Dorsolateral prefrontal cortex (tissue), 120 donors: ENCODE measurements at regions of chr2 and their contacts with region 1.

Region 1: GRCh38 chr2:61538200-61538919 is at the start of gene XPO1:
- DNase-seq: peak; percentile 99 to 100 (median 99)
- H3K4me3 ChIP-seq: peak within 1 kb of the TSS; percentile 54 to 96 (median 79)
- H3K27ac ChIP-seq: peak within 1 kb of the TSS; percentile 92 to 99 (median 98)
- H3K27me3 ChIP-seq: no peaks in the 10 kb centered on the region
- CTCF ChIP-seq: peak in 5 of 56 donors; percentile 3 to 27 (median 5)
- total RNA-seq, gene XPO1: 103 to 387 (median 148) TPM

Region 2: DNA sequence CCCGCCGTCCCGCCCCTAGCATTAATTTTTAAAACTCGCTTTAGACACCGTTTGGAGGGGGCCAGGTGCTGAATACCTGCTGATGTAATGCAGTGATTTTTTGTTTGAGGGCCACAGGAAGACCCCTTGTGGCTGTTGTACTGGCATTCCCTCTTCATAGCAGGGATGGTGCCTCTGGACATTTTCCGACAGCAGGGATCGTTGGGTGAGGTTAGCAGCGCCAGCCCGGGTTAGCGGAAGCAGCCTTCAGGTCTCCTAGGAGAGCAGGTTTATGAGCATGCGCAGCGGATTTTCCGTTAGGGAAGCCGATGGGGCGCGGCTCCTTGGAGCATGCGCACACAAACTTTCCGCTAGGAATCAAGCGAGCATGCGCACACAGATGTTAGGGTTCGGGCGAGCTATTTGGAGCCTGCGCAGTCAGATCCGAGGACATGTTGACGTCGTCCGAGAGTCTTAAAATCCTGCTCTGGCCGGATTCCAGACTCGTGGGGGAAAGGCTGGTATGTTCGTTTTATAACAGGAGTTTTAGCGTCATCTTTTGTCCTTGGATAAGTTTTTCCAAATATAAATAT is 393.6 kb before region 1 on chr2:
- intact Hi-C with region 1: loop called in 1 of 2 experiments (anchors 10 kb)
- DNase-seq: peak; percentile 79 to 93 (median 88)
- H3K4me3 ChIP-seq: peak overlapping the region; percentile 51 to 96 (median 69)
- H3K27ac ChIP-seq: peak overlapping the region in 58 of 59 donors; percentile 31 to 96 (median 87)
- H3K27me3 ChIP-seq: no peaks in the 10 kb centered on the region
- CTCF ChIP-seq: peak in 29 of 56 donors; percentile 3 to 50 (median 26)

Region 3: DNA sequence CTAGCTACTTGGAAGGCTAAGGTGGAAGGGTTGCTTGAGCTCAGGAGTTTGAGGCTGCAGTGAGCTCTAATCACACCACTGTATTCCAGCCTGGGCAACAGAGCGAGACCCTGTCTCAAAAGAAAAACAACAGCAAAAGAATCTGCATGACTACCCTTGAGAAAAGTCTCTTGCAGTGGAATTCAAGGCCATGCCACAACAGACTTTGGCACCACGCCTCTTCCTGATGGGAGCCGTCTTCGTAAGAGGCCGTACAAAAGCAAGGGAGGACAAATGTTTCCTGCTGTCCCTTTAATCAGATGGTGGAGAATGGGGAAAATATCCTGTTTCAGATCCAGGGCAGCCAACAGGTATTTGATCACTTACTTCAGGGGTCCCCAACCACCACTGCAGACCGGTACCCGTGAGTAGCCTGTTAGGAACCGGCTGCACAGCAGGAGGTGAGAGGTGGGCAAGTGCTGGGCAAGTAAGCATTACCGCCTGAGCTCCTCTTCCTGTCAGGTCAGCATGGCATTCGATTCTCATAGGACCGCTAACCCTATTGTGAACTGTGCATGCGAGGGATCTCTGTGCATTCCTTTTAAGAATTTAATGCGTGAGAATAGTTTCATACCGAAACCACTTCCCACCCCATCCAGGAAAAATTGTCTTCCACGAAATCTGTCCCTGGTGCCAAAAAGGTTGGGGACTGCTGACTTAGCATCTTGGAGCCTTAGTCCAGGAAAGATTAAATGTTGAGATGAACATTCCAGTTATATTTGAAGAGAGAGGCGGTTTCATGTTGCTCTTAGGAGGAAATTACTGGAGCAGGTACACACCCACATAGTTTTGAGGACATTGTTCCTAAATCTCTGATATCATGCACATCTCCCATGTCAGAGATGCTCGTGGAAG is 94.2 kb after region 1 on chr2:
- intact Hi-C with region 1: loop called in 1 of 2 experiments (anchors 10 kb)
- DNase-seq: no peak
- H3K4me3 ChIP-seq: no peak overlapping the region
- H3K27ac ChIP-seq: no peak overlapping the region
- H3K27me3 ChIP-seq: no peaks in the 10 kb centered on the region
- CTCF ChIP-seq: no peak

Region 4: GRCh38 chr2:61694312-61695274 is 156.2 kb after region 1 on chr2:
- intact Hi-C with region 1: loop called (anchors 2 to 5 kb)
- DNase-seq: peak; percentile 87 to 94 (median 92)
- H3K4me3 ChIP-seq: peak overlapping the region; percentile 57 to 96 (median 86)
- H3K27ac ChIP-seq: peak overlapping the region; percentile 59 to 96 (median 90)
- H3K27me3 ChIP-seq: no peaks in the 10 kb centered on the region
- CTCF ChIP-seq: peak in 52 of 56 donors; percentile 32 to 82 (median 58)

Region 5: DNA sequence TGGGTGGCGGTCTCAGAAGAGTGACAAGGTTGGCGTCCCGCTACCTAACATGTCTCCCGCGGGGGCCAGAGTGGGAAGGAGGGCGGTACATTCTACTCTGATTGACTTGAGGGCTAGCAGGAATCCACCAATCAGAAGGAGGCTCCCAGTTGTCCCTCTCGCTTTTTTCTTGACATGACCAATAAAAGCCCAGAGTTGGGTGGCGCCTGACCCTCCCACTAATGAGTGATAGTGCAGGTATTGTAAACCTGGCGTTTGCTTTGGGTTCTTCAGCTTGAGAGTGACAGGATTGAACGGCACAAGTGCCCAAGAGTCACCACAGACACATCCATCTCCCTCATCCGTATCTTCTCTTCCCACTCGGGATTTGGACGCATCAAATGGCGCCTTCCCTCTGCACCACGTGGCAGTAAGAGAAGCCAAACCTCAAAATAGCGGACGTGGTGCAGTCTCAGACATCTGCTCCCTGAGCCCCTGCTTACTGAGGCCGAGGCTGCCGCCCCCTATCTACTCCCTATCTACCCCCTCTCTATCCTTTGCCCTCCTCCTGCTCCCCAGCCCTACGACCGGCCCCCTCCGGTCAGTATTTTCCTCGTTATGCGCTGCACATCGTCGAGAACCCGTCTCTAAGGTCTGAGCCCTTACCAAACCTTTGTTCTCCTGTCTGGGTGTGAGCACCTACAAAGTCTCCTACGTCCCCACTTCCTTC is 316.3 kb after region 1 on chr2:
- intact Hi-C with region 1: loop called (anchors 5 to 10 kb)
- DNase-seq: peak; percentile 66 to 97 (median 94)
- H3K4me3 ChIP-seq: peak overlapping the region; percentile 39 to 100 (median 88)
- H3K27ac ChIP-seq: peak overlapping the region; percentile 60 to 97 (median 89)
- H3K27me3 ChIP-seq: no peaks in the 10 kb centered on the region
- CTCF ChIP-seq: peak in 9 of 56 donors; percentile 4 to 24 (median 11)